CD4-positive, alpha-beta T cell (primary cell): ENCODE measurements at regions of chr14 and their contacts with region 1.

Region 1: DNA sequence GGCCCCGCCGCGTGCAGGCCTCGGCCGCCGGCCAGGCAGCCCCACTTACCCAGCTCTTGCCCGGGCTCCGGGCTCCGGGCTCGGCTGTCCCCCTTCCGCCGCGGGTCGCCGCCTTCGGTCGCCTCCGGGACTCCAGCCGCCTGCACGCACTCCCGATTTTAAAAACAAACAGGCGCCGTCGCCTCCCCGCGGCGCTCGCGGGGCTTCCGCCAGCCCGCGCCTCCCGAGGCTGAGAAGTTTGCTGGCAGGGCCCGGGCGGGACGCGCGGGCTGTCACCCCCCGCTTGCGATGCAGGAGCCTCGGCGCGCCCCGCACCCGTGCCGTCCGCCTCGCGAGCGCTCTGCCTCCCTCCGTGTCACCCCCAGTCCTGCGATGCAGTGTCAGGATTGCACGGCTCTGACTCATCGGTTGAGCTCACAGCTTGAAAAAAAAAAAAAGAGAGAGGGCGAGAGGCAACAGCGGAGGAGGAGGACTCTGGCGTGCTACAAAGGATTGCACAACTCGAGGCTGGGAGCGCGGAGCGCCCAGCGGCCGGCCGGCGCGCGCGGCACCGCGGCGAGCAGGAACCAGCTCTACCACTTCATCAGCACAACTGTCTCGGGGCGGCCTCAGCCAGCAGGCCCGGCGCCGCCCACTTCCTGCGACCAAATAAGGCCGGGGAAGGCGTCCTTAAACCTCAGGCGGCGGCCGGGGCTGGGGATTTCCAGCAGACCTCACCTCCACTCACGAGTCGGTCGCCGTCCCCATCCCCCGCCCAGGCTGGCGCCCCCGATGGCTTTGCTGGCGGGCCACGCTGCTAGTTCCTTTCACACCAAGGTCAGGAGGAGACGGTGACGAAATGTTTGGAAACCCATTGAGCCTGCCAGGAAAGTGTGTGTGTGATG is 45.8 kb upstream of the PNMA1 start:
- DNase-seq: peak; percentile 89 to 98 (median 94)
- ATAC-seq: peak; percentile 75
- H3K4me3 ChIP-seq: peak overlapping the region; percentile 63
- H3K4me3 Mint-ChIP-seq: peak overlapping the region; percentile 93
- H3K27ac ChIP-seq: peak overlapping the region; percentile 94 to 97
- H3K27ac Mint-ChIP-seq: peak overlapping the region; percentile 97
- H3K4me1 ChIP-seq: peaks cover 82% of the 10 kb centered on the region
- H3K4me1 Mint-ChIP-seq: peaks cover 86% of the 10 kb centered on the region
- H3K27me3 ChIP-seq: no peaks in the 10 kb centered on the region
- H3K27me3 Mint-ChIP-seq: no peaks in the 10 kb centered on the region
- CTCF ChIP-seq: no peak

Region 2: GRCh38 chr14:73613046-73613383 is 146.9 kb before region 1 on chr14:
- CTCF ChIA-PET with region 1: no interaction called
- POLR2A ChIA-PET with region 1: interaction called, 11 read pairs
- intact Hi-C with region 1: no loop called
- DNase-seq: no peak
- ATAC-seq: no peak
- H3K4me3 ChIP-seq: peak overlapping the region; percentile 56
- H3K4me3 Mint-ChIP-seq: peak overlapping the region; percentile 91
- H3K27ac ChIP-seq: peak overlapping the region in 1 of 2 donors; percentile 16
- H3K27ac Mint-ChIP-seq: peak overlapping the region; percentile 82
- H3K4me1 ChIP-seq: peaks cover 10% of the 10 kb centered on the region
- H3K4me1 Mint-ChIP-seq: peaks cover 7% of the 10 kb centered on the region
- H3K27me3 ChIP-seq: no peaks in the 10 kb centered on the region
- H3K27me3 Mint-ChIP-seq: no peaks in the 10 kb centered on the region
- CTCF ChIP-seq: no peak

Region 3: DNA sequence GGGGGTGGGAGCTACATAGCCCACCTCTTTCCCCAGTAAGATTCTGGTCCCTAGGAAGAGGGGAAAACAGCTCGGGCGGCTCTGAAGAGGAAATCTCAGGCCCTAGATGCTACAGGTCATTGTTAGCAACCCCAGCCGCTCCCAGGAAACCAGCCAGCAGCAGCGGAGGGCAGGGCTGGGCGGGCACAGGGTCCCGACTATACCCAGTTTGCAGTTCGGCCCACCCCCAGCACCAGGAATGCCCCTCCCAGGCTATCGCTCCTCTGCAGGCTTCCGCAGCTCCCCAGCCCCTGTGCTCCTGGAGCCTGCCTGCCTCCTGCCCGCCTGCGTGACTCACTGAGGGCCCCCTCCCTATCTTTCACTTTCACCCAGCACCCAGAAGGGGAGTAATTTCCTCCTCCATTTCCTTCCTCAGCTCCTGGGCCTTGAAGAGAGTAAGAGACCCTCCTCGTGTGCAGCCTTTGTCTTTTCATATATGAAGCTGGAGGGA is 18.5 kb before region 1 on chr14:
- CTCF ChIA-PET with region 1: interaction called, 65 read pairs
- POLR2A ChIA-PET with region 1: interaction called, 282 read pairs
- intact Hi-C with region 1: loop called (anchors 2 kb)
- DNase-seq: peak in 13 of 14 experiments; percentile 45 to 84 (median 65)
- ATAC-seq: peak; percentile 79
- H3K4me3 ChIP-seq: peak overlapping the region; percentile 36
- H3K4me3 Mint-ChIP-seq: peak overlapping the region; percentile 87
- H3K27ac ChIP-seq: peak overlapping the region; percentile 76 to 78
- H3K27ac Mint-ChIP-seq: peak overlapping the region; percentile 99
- H3K4me1 ChIP-seq: peaks cover 83% of the 10 kb centered on the region
- H3K4me1 Mint-ChIP-seq: peaks cover 65% of the 10 kb centered on the region
- H3K27me3 ChIP-seq: no peaks in the 10 kb centered on the region
- H3K27me3 Mint-ChIP-seq: no peaks in the 10 kb centered on the region
- CTCF ChIP-seq: no peak

Region 4: DNA sequence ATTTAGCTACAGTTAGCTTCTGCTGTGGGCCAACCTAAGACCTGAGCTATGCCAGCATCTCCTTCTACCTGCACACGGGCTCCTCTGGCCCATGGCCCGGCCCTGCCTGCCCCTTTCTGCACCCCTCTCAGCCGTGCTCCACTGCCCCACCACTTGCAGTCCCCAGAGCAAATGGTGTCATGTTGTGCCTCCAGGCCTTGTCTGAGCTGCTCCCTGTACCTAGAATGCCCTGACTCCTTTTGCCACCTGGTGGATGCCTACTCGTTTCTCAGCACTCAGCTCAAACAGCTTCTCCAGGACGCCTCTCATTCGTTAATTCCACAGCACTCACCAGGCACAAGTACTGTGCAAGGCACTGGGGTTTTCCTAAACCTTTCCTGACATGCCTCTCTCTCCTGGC is 17.4 kb after region 1 on chr14:
- CTCF ChIA-PET with region 1: interaction called, 60 read pairs
- POLR2A ChIA-PET with region 1: interaction called, 430 read pairs
- intact Hi-C with region 1: loop called in 1 of 2 experiments (anchors 1 kb)
- DNase-seq: peak in 6 of 14 experiments; percentile 28 to 69 (median 44)
- ATAC-seq: peak; percentile 72
- H3K4me3 ChIP-seq: no peak overlapping the region
- H3K4me3 Mint-ChIP-seq: peak overlapping the region; percentile 39
- H3K27ac ChIP-seq: peak overlapping the region in 1 of 2 donors; percentile 10
- H3K27ac Mint-ChIP-seq: peak overlapping the region; percentile 73
- H3K4me1 ChIP-seq: peaks cover 57% of the 10 kb centered on the region
- H3K4me1 Mint-ChIP-seq: peaks cover 70% of the 10 kb centered on the region
- H3K27me3 ChIP-seq: no peaks in the 10 kb centered on the region
- H3K27me3 Mint-ChIP-seq: no peaks in the 10 kb centered on the region
- CTCF ChIP-seq: no peak

Region 5: DNA sequence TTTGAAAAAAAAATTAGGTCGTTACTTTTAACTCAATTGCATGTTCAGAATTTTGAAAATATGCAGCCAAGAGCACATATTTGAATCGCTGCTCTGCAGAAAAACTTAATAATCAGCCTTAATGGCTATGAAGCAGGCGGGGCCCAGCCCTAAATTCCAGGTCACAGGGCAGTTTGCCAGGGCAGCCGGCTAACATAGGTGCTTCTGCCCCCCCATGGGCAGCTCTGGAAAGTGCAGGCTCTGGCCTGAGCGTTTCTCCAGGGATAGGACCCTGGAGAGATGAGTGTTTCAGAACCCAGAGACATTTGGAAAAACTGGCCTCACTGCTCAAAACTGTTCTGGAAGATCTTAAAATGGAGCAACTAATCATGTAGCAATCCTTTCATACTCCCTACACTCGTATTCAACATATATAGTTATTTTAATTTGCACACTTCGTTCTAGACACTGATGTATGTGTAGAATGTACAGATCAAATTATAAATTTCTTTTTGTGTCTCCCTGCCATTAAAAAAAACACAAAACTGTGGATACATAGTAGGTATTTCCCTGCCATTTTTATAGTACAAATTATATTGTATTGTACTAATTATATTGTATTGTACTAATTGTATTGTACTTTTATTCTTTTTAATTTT is 65.7 kb after region 1 on chr14:
- CTCF ChIA-PET with region 1: interaction called, 8 read pairs
- POLR2A ChIA-PET with region 1: interaction called, 17 read pairs
- intact Hi-C with region 1: no loop called
- DNase-seq: peak; percentile 62 to 88 (median 76)
- ATAC-seq: peak; percentile 99
- H3K4me3 ChIP-seq: no peak overlapping the region
- H3K4me3 Mint-ChIP-seq: no peak overlapping the region
- H3K27ac ChIP-seq: no peak overlapping the region
- H3K27ac Mint-ChIP-seq: no peak overlapping the region
- H3K4me1 ChIP-seq: peaks cover 10% of the 10 kb centered on the region
- H3K4me1 Mint-ChIP-seq: no peaks in the 10 kb centered on the region
- H3K27me3 ChIP-seq: no peaks in the 10 kb centered on the region
- H3K27me3 Mint-ChIP-seq: no peaks in the 10 kb centered on the region
- CTCF ChIP-seq: peak; percentile 95

Region 6: GRCh38 chr14:73886449-73887317 is 126.7 kb after region 1 on chr14 and contains the start of gene ZNF410:
- CTCF ChIA-PET with region 1: no interaction called
- POLR2A ChIA-PET with region 1: interaction called, 21 read pairs
- intact Hi-C with region 1: no loop called
- DNase-seq: peak; percentile 66 to 96 (median 78)
- ATAC-seq: peak; percentile 97
- H3K4me3 ChIP-seq: peak within 1 kb of the TSS; percentile 98
- H3K4me3 Mint-ChIP-seq: peak within 1 kb of the TSS; percentile 98
- H3K27ac ChIP-seq: peak within 1 kb of the TSS; percentile 93 to 98
- H3K27ac Mint-ChIP-seq: peak within 1 kb of the TSS; percentile 94
- H3K4me1 ChIP-seq: peaks cover 21% of the 10 kb centered on the region
- H3K4me1 Mint-ChIP-seq: peaks cover 49% of the 10 kb centered on the region
- H3K27me3 ChIP-seq: no peaks in the 10 kb centered on the region
- H3K27me3 Mint-ChIP-seq: no peaks in the 10 kb centered on the region
- CTCF ChIP-seq: no peak
- total RNA-seq, gene ZNF410: 74.3 to 81.1 TPM

Region 7: DNA sequence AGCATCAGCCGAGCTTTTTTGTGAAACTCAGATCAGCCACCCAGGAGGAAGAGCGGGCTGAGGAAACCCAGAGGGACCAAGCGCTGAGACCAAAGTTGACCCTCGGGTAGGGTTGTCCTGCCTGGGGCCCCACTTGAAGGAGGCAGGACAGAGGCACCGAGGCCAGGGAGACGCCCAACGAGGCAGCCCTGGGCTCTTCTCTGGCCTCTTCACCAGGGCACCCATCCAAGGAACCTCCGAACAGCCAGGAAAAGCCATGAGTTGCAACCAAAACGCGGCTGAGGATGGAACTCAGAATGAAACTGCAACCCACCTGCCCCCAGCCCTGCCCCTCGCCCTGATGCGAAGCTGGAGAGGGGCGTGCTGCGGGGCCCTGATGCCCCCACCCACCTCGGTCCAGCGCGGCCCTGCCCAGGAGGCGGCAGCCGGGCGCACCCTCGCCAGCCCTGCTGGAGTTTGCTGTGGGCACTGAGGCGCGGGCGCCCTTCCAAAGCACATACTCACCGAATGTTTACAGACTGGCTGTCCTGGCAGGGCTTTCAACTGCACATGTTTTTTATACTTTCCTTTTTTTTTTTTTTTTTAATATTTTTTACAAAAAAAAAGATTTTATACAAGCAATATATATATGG is 1709.8 kb after region 1 on chr14:
- CTCF ChIA-PET with region 1: no interaction called
- POLR2A ChIA-PET with region 1: no interaction called
- intact Hi-C with region 1: no loop called
- DNase-seq: no peak
- ATAC-seq: no peak
- H3K4me3 ChIP-seq: no peak overlapping the region
- H3K4me3 Mint-ChIP-seq: no peak overlapping the region
- H3K27ac ChIP-seq: no peak overlapping the region
- H3K27ac Mint-ChIP-seq: no peak overlapping the region
- H3K4me1 ChIP-seq: no peaks in the 10 kb centered on the region
- H3K4me1 Mint-ChIP-seq: no peaks in the 10 kb centered on the region
- H3K27me3 ChIP-seq: no peaks in the 10 kb centered on the region
- H3K27me3 Mint-ChIP-seq: no peaks in the 10 kb centered on the region
- CTCF ChIP-seq: no peak